ENCODE measurements at regions of chrX and their contacts with region 1.

Region 1: GRCh38 chrX:134006484-134007161 is 21.2 kb upstream of the GPC3 start:
- DNase-seq: peak; percentile 52
- H3K4me3 Mint-ChIP-seq: no peak overlapping the region
- H3K27ac Mint-ChIP-seq: no peak overlapping the region
- H3K4me1 Mint-ChIP-seq: peaks cover 6% of the 10 kb centered on the region
- H3K27me3 Mint-ChIP-seq: no peaks in the 10 kb centered on the region

Region 2: GRCh38 chrX:133685822-133686221 is 320.8 kb before region 1 on chrX:
- CTCF ChIA-PET with region 1: no interaction called
- intact Hi-C with region 1: no loop called
- DNase-seq: no peak
- H3K4me3 Mint-ChIP-seq: no peak overlapping the region
- H3K27ac Mint-ChIP-seq: no peak overlapping the region
- H3K4me1 Mint-ChIP-seq: peaks cover 8% of the 10 kb centered on the region
- H3K27me3 Mint-ChIP-seq: no peaks in the 10 kb centered on the region

Region 3: GRCh38 chrX:134171661-134172587 is 165.3 kb after region 1 on chrX:
- CTCF ChIA-PET with region 1: no interaction called
- intact Hi-C with region 1: loop called (anchors 5 kb)
- DNase-seq: peak; percentile 53
- H3K4me3 Mint-ChIP-seq: peak overlapping the region; percentile 77
- H3K27ac Mint-ChIP-seq: peak overlapping the region; percentile 87
- H3K4me1 Mint-ChIP-seq: peaks cover 19% of the 10 kb centered on the region
- H3K27me3 Mint-ChIP-seq: peaks cover 3% of the 10 kb centered on the region

Measured in activated naive CD4-positive, alpha-beta T cell treated with anti-CD3 and anti-CD28 coated beads for 36 hours (primary cell).